CD4-positive, alpha-beta memory T cell (primary cell): ENCODE measurements at regions of chr3 and their contacts with region 1.

Region 1: GRCh38 chr3:112111785-112112402 is 21.2 kb downstream of the GCSAM start:
- DNase-seq: peak; percentile 70 to 76 (median 73)
- H3K4me3 ChIP-seq: no peak overlapping the region
- H3K4me3 Mint-ChIP-seq: no peak overlapping the region
- H3K27ac ChIP-seq: no peak overlapping the region
- H3K27ac Mint-ChIP-seq: peak overlapping the region in 5 of 7 donors; percentile 10 to 75 (median 59)
- H3K4me1 ChIP-seq: no peaks in the 10 kb centered on the region
- H3K4me1 Mint-ChIP-seq: peaks cover 8 to 10% (median 8%) of the 10 kb centered on the region in 4 donors
- H3K27me3 ChIP-seq: no peaks in the 10 kb centered on the region
- H3K27me3 Mint-ChIP-seq: no peaks in the 10 kb centered on the region

Region 2: DNA sequence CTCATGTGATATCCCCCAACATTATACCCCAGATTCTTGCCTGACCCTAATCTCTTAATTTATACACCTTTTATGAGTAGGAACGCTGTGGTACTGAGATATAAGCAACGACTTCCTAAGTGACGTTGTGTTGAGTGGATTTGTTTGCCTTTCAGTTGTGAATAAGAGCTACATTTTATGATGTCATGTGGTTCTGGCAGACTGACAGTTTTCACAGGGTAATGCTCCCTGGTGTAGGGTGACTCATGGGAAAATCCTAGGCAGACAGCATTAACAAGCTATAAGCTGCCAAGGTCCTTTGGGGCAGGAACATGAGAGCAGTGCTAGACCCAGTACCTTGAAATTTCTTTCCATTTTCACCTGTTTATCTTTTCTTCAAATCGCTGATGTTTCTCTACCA is 14.5 kb before region 1 on chr3:
- CTCF ChIA-PET with region 1: interaction called, 10 read pairs
- POLR2A ChIA-PET with region 1: no interaction called
- intact Hi-C with region 1: no loop called
- DNase-seq: no peak
- H3K4me3 ChIP-seq: no peak overlapping the region
- H3K4me3 Mint-ChIP-seq: no peak overlapping the region
- H3K27ac ChIP-seq: no peak overlapping the region
- H3K27ac Mint-ChIP-seq: no peak overlapping the region
- H3K4me1 ChIP-seq: peaks cover 7% of the 10 kb centered on the region
- H3K4me1 Mint-ChIP-seq: peaks cover 9 to 11% (median 10%) of the 10 kb centered on the region in 4 donors
- H3K27me3 ChIP-seq: no peaks in the 10 kb centered on the region
- H3K27me3 Mint-ChIP-seq: peaks cover 0 to 7% of the 10 kb centered on the region in 2 donors

Region 3: GRCh38 chr3:112136959-112137693 is 25.2 kb after region 1 on chr3:
- CTCF ChIA-PET with region 1: interaction called, 43 read pairs
- POLR2A ChIA-PET with region 1: interaction called, 4 read pairs
- intact Hi-C with region 1: loop called (anchors 1 kb)
- DNase-seq: peak in 4 of 5 donors; percentile 41 to 50 (median 45)
- H3K4me3 ChIP-seq: no peak overlapping the region
- H3K4me3 Mint-ChIP-seq: peak overlapping the region in 1 of 8 donors; percentile 40
- H3K27ac ChIP-seq: no peak overlapping the region
- H3K27ac Mint-ChIP-seq: peak overlapping the region; percentile 10 to 99 (median 68)
- H3K4me1 ChIP-seq: peaks cover 58% of the 10 kb centered on the region
- H3K4me1 Mint-ChIP-seq: peaks cover 45 to 61% (median 53%) of the 10 kb centered on the region in 4 donors
- H3K27me3 ChIP-seq: no peaks in the 10 kb centered on the region
- H3K27me3 Mint-ChIP-seq: no peaks in the 10 kb centered on the region

Region 4: DNA sequence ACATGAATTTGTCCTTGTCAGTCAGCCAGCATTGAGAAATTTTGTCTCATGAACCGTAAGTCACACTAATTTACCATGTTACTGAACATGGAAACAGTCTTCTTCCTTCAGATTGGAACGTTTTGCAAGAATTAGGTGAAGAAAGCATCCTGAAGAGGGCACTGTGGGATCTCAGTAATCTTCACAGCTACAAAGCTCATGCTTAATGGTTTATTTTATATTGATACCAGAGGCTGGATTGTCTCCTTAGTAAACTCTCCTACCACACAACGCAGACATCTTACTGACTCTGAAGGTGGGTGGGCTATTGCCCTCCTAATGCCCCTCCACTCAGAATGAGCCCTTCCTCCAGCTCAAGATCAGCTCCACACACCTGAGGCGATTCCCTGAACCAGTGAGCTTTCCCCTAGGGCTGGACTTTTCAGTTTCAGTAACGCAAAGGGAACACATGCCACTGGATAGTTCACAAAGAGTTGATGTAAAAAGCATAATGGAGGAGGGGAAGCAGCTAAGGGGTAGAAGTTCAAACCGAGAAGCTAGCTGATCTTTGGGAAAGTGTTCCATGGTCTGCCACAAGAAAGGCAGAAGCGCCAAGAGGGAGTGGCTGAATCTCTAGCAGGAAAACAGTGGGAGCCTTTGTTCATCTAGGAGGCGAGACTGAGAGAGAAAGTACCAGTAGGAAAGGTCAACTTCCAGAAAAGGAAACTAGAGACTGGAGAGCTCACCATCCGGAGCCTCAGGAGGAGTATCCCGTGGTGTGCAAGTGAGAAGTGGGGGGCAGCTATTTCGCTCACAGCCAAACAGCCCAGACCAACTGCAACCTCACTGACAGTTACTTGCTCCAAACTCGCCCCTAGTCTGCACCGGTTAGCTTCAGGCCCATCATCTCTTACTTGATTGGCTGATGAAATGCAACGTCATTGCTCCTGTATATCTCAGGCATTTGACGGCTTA is 181.8 kb after region 1 on chr3 and contains the start of gene SLC9C1:
- CTCF ChIA-PET with region 1: interaction called, 52 read pairs
- POLR2A ChIA-PET with region 1: no interaction called
- intact Hi-C with region 1: loop called (anchors 1 kb)
- DNase-seq: peak in 4 of 5 donors; percentile 35 to 56 (median 38)
- H3K4me3 ChIP-seq: no peak within 1 kb of the TSS
- H3K4me3 Mint-ChIP-seq: peak within 1 kb of the TSS; percentile 9 to 76 (median 48)
- H3K27ac ChIP-seq: no peak within 1 kb of the TSS
- H3K27ac Mint-ChIP-seq: peak within 1 kb of the TSS in 1 of 7 donors; percentile 17
- H3K4me1 ChIP-seq: peaks cover 19% of the 10 kb centered on the region
- H3K4me1 Mint-ChIP-seq: peaks cover 15 to 28% (median 25%) of the 10 kb centered on the region in 4 donors
- H3K27me3 ChIP-seq: no peaks in the 10 kb centered on the region
- H3K27me3 Mint-ChIP-seq: peaks cover 0 to 2% of the 10 kb centered on the region in 2 donors
- total RNA-seq, gene SLC9C1: not detected

Region 5: GRCh38 chr3:112437146-112438022 is 325.5 kb after region 1 on chr3:
- CTCF ChIA-PET with region 1: interaction called, 19 read pairs
- POLR2A ChIA-PET with region 1: no interaction called
- intact Hi-C with region 1: loop called (anchors 1 kb)
- DNase-seq: peak in 4 of 5 donors; percentile 24 to 39 (median 32)
- H3K4me3 ChIP-seq: no peak overlapping the region
- H3K4me3 Mint-ChIP-seq: peak overlapping the region in 7 of 8 donors; percentile 39 to 84 (median 63)
- H3K27ac ChIP-seq: no peak overlapping the region
- H3K27ac Mint-ChIP-seq: peak overlapping the region in 5 of 7 donors; percentile 16 to 45 (median 42)
- H3K4me1 ChIP-seq: peaks cover 9% of the 10 kb centered on the region
- H3K4me1 Mint-ChIP-seq: peaks cover 9 to 24% (median 19%) of the 10 kb centered on the region in 4 donors
- H3K27me3 ChIP-seq: no peaks in the 10 kb centered on the region
- H3K27me3 Mint-ChIP-seq: no peaks in the 10 kb centered on the region

Region 6: GRCh38 chr3:112519424-112520001 is 407.6 kb after region 1 on chr3:
- CTCF ChIA-PET with region 1: interaction called, 51 read pairs
- POLR2A ChIA-PET with region 1: no interaction called
- intact Hi-C with region 1: loop called (anchors 1 kb)
- DNase-seq: peak; percentile 55 to 70 (median 64)
- H3K4me3 ChIP-seq: no peak overlapping the region
- H3K4me3 Mint-ChIP-seq: no peak overlapping the region
- H3K27ac ChIP-seq: no peak overlapping the region
- H3K27ac Mint-ChIP-seq: no peak overlapping the region
- H3K4me1 ChIP-seq: peaks cover 14% of the 10 kb centered on the region
- H3K4me1 Mint-ChIP-seq: peaks cover 11 to 15% (median 14%) of the 10 kb centered on the region in 4 donors
- H3K27me3 ChIP-seq: no peaks in the 10 kb centered on the region
- H3K27me3 Mint-ChIP-seq: no peaks in the 10 kb centered on the region